B cell (primary cell): ENCODE measurements at regions of chr7 and their contacts with region 1.

Region 1: GRCh38 chr7:156816943-156817572 is 75.9 kb downstream of the LMBR1 start:
- DNase-seq: peak; percentile 30
- ATAC-seq: no peak
- H3K4me3 ChIP-seq: no peak overlapping the region
- H3K4me3 Mint-ChIP-seq: no peak overlapping the region
- H3K27ac ChIP-seq: no peak overlapping the region
- H3K27ac Mint-ChIP-seq: no peak overlapping the region
- H3K4me1 ChIP-seq: no peaks in the 10 kb centered on the region
- H3K4me1 Mint-ChIP-seq: no peaks in the 10 kb centered on the region
- H3K27me3 ChIP-seq: no peaks in the 10 kb centered on the region
- H3K27me3 Mint-ChIP-seq: no peaks in the 10 kb centered on the region
- CTCF ChIP-seq: peak; percentile 76

Region 2: GRCh38 chr7:155796381-155797261 is 1020.4 kb before region 1 on chr7:
- CTCF ChIA-PET with region 1: interaction called, 3 read pairs
- POLR2A ChIA-PET with region 1: no interaction called
- intact Hi-C with region 1: loop called (anchors 1 kb)
- DNase-seq: peak; percentile 72
- ATAC-seq: peak; percentile 91
- H3K4me3 ChIP-seq: no peak overlapping the region
- H3K4me3 Mint-ChIP-seq: no peak overlapping the region
- H3K27ac ChIP-seq: no peak overlapping the region
- H3K27ac Mint-ChIP-seq: no peak overlapping the region
- H3K4me1 ChIP-seq: peaks cover 18% of the 10 kb centered on the region in 2 donors
- H3K4me1 Mint-ChIP-seq: peaks cover 10% of the 10 kb centered on the region
- H3K27me3 ChIP-seq: peaks cover 0 to 49% (median 15%) of the 10 kb centered on the region in 4 experiments
- H3K27me3 Mint-ChIP-seq: peaks cover 40% of the 10 kb centered on the region
- CTCF ChIP-seq: peak; percentile 88

Region 3: DNA sequence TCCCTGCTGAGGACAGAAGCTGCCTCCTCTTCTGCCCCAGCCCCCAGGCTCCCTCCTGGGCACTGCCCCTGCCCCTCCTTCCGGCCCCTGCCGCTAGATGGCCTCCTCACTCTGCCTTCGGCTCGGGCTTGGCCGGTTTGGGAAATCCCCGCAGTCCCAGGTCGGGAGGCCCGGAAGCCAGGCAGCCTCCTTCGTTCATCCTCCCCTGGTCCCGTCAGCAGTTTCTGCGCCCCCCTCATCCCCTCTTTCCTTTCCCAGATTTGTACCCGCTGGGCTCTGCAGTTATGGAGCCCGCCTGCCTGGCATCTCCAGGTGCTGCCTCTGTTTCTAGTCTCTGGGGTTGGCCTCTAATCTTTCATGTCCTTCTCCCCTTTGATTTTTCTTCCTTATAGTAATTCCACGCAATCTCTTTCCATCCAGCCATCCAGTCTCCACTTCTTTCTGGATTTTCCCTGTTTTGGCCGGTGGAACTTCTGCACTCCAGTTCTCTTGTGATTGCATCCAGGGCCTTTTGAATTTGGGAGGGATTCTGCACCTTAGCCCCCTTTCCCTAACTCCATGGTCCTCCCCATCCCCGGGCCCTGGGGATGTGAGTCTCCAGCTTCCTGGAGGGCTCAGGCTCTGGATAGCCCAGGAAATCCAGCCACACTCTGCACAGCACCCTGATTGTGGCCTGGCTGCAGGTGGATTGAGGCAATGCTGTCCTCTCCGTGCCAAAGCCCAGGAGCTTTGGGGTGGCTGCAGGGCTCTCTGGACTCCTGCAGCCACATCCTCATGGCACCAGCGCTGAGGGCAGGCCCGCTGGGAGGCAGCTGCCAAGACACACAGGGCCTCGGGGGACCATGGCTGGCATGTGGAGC is 1001.5 kb before region 1 on chr7:
- CTCF ChIA-PET with region 1: no interaction called
- POLR2A ChIA-PET with region 1: no interaction called
- intact Hi-C with region 1: loop called (anchors 5 kb)
- DNase-seq: peak; percentile 55
- ATAC-seq: peak; percentile 65
- H3K4me3 ChIP-seq: no peak overlapping the region
- H3K4me3 Mint-ChIP-seq: peak overlapping the region; percentile 1
- H3K27ac ChIP-seq: no peak overlapping the region
- H3K27ac Mint-ChIP-seq: no peak overlapping the region
- H3K4me1 ChIP-seq: peaks cover 12 to 13% of the 10 kb centered on the region in 2 donors
- H3K4me1 Mint-ChIP-seq: peaks cover 19% of the 10 kb centered on the region
- H3K27me3 ChIP-seq: peaks cover 0 to 50% (median 21%) of the 10 kb centered on the region in 4 experiments
- H3K27me3 Mint-ChIP-seq: peaks cover 47% of the 10 kb centered on the region
- CTCF ChIP-seq: peak; percentile 20

Region 4: DNA sequence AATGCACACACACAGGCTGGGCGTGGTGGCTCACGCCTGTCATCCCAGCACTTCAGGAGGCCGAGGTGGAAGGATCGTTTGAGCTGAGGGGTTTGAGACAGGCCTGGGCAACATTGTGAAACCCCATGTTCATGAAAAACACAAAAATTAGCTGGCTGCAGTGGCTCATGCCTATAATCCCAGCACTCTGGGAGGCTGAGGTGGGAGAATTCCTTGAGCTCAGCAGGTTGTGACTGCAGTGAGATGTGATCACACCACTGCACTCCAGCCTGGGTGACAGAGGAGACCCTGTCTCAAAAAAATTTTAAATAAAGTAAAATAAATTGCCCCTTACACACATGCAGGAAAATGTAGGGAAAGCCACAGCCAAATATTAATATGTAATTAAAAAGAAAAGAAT is 132.4 kb before region 1 on chr7:
- CTCF ChIA-PET with region 1: no interaction called
- POLR2A ChIA-PET with region 1: no interaction called
- intact Hi-C with region 1: no loop called
- DNase-seq: no peak
- ATAC-seq: no peak
- H3K4me3 ChIP-seq: no peak overlapping the region
- H3K4me3 Mint-ChIP-seq: no peak overlapping the region
- H3K27ac ChIP-seq: no peak overlapping the region
- H3K27ac Mint-ChIP-seq: no peak overlapping the region
- H3K4me1 ChIP-seq: no peaks in the 10 kb centered on the region
- H3K4me1 Mint-ChIP-seq: no peaks in the 10 kb centered on the region
- H3K27me3 ChIP-seq: no peaks in the 10 kb centered on the region
- H3K27me3 Mint-ChIP-seq: no peaks in the 10 kb centered on the region
- CTCF ChIP-seq: no peak